GM13977 (cell line): ENCODE measurements at regions of chr1 and their contacts with region 1.

Region 1: DNA sequence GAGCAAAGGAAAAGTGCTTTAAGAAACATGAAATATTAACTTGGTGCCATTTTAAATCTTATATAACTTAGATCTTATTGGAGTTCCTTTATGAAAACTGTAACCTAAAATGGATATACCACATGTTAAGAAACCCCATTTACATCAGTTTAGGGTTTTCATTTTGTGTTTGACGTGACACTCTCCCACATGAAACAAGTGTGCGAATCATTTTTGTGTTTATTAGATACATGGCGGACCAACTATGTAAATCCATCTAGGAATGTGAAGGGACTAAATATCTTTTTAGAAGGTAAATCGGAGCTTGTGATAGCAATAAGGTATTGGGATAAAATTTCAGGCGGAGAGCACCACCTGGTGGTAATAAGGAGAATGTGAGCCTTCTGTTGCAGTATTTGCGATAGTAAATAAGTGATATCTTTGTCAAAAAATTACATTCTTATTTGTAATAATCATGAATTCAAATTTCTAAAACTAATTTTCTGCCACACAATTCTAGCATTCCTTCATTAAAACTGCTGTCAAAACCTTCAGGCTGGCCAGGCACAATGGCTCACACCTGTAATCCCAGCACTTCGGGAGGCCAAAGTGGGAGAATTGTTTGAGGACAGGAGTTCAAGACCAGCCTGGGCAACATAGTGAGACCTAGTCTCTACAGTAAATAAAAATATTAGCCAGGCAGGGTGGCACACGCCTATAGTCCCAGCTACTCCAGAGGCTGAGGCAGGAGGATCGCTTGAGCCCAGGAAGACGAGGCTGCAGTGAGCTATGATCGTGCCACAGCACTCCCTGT is 31.3 kb downstream of the SMAP2 start:
- DNase-seq: peak; percentile 22
- CTCF ChIP-seq: peak; percentile 75

Region 2: GRCh38 chr1:39804006-39804405 is 600.9 kb before region 1 on chr1:
- in situ Hi-C with region 1: no loop called
- DNase-seq: no peak
- CTCF ChIP-seq: no peak

Region 3: GRCh38 chr1:40078512-40079333 is 326.1 kb before region 1 on chr1:
- in situ Hi-C with region 1: no loop called
- DNase-seq: peak; percentile 58
- CTCF ChIP-seq: peak; percentile 80

Region 4: GRCh38 chr1:40143891-40144575 is 260.8 kb before region 1 on chr1:
- in situ Hi-C with region 1: loop called (anchors 10 kb)
- DNase-seq: peak; percentile 58
- CTCF ChIP-seq: peak; percentile 73

Region 5: GRCh38 chr1:40352126-40352525 is 52.7 kb before region 1 on chr1:
- in situ Hi-C with region 1: loop called (anchors 10 kb)
- DNase-seq: no peak
- CTCF ChIP-seq: no peak